Left lung (tissue), 14 donors: ENCODE measurements at regions of chr14 and their contacts with region 1.

Region 1: DNA sequence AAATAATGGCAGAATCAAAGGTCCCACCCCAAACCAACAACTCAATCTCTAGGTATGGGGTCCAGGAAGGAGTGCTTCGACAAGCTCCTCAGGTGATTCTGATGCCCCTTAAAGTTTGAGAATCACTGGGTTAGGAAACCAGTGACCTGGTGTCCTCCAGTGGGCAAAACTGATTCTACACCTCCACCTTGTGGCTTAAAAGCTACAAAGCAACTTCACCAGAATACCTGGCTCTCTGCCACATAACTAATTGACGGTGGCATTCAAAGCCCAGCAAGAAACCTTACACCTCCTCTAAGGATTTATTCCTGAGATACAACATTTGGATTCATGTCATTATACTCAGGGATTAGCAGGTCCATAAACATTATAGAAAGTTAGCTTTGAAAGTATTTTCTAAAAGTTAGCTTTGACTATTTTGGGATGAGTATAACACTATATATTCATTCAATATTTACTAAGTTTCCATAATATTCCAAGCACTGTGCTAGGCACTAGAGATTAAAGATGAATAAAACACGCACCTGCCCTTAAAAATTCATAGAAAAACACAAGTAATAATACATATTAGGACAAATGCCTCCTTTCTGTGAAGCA is 45.4 kb downstream of the DCAF5 start:
- DNase-seq: peak in 2 of 4 donors; percentile 45 to 65
- ATAC-seq: peak; percentile 86
- H3K4me3 ChIP-seq: no peak overlapping the region
- H3K27ac ChIP-seq: no peak overlapping the region
- H3K4me1 ChIP-seq: no peaks in the 10 kb centered on the region
- H3K27me3 ChIP-seq: no peaks in the 10 kb centered on the region
- CTCF ChIP-seq: peak; percentile 52 to 63

Region 2: GRCh38 chr14:68318828-68319227 is 788.7 kb before region 1 on chr14:
- intact Hi-C with region 1: no loop called
- DNase-seq: no peak
- ATAC-seq: no peak
- H3K4me3 ChIP-seq: no peak overlapping the region
- H3K27ac ChIP-seq: no peak overlapping the region
- H3K4me1 ChIP-seq: peaks cover 0 to 5% of the 10 kb centered on the region in 2 donors
- H3K27me3 ChIP-seq: no peaks in the 10 kb centered on the region
- CTCF ChIP-seq: no peak

Region 3: GRCh38 chr14:68862954-68863594 is 244.4 kb before region 1 on chr14:
- intact Hi-C with region 1: loop called in 1 of 2 experiments (anchors 10 kb)
- DNase-seq: peak in 3 of 4 donors; percentile 65 to 88 (median 74)
- ATAC-seq: peak; percentile 95
- H3K4me3 ChIP-seq: no peak overlapping the region
- H3K27ac ChIP-seq: no peak overlapping the region
- H3K4me1 ChIP-seq: no peaks in the 10 kb centered on the region
- H3K27me3 ChIP-seq: no peaks in the 10 kb centered on the region
- CTCF ChIP-seq: peak; percentile 57 to 73